GM10248 (cell line): ENCODE measurements at regions of chr2 and their contacts with region 1.

Region 1: GRCh38 chr2:127049927-127050802 is 56.8 kb downstream of the BIN1 start:
- DNase-seq: peak; percentile 88
- CTCF ChIP-seq: peak; percentile 96

Region 2: GRCh38 chr2:127032621-127033020 is 17.5 kb before region 1 on chr2:
- CTCF ChIA-PET with region 1: interaction called, 11 read pairs
- POLR2A ChIA-PET with region 1: no interaction called
- DNase-seq: no peak
- CTCF ChIP-seq: no peak

Region 3: GRCh38 chr2:127039387-127040031 is 10.7 kb before region 1 on chr2:
- CTCF ChIA-PET with region 1: interaction called, 27 read pairs
- POLR2A ChIA-PET with region 1: no interaction called
- DNase-seq: peak; percentile 54
- CTCF ChIP-seq: no peak

Region 4: GRCh38 chr2:128868686-128869551 is 1818.8 kb after region 1 on chr2:
- CTCF ChIA-PET with region 1: no interaction called
- POLR2A ChIA-PET with region 1: no interaction called
- DNase-seq: no peak
- CTCF ChIP-seq: no peak